ENCODE measurements at regions of chr12 and their contacts with region 1.

Region 1: GRCh38 chr12:27014085-27014858 is at the start of gene TM7SF3:
- DNase-seq: peak; percentile 96
- ATAC-seq: peak; percentile 92
- H3K4me3 Mint-ChIP-seq: peak within 1 kb of the TSS; percentile 91
- H3K27ac Mint-ChIP-seq: peak within 1 kb of the TSS; percentile 94
- H3K4me1 Mint-ChIP-seq: peaks cover 49% of the 10 kb centered on the region
- H3K27me3 Mint-ChIP-seq: no peaks in the 10 kb centered on the region
- CTCF ChIP-seq: peak; percentile 33
- total RNA-seq, gene TM7SF3: 20.7 and 30.5 TPM in 2 replicates

Region 2: GRCh38 chr12:26080911-26081310 is 933.4 kb before region 1 on chr12:
- CTCF ChIA-PET with region 1: no interaction called
- POLR2A ChIA-PET with region 1: no interaction called
- intact Hi-C with region 1: no loop called
- DNase-seq: no peak
- ATAC-seq: no peak
- H3K4me3 Mint-ChIP-seq: no peak overlapping the region
- H3K27ac Mint-ChIP-seq: no peak overlapping the region
- H3K4me1 Mint-ChIP-seq: no peaks in the 10 kb centered on the region
- H3K27me3 Mint-ChIP-seq: no peaks in the 10 kb centered on the region
- CTCF ChIP-seq: no peak

Region 3: DNA sequence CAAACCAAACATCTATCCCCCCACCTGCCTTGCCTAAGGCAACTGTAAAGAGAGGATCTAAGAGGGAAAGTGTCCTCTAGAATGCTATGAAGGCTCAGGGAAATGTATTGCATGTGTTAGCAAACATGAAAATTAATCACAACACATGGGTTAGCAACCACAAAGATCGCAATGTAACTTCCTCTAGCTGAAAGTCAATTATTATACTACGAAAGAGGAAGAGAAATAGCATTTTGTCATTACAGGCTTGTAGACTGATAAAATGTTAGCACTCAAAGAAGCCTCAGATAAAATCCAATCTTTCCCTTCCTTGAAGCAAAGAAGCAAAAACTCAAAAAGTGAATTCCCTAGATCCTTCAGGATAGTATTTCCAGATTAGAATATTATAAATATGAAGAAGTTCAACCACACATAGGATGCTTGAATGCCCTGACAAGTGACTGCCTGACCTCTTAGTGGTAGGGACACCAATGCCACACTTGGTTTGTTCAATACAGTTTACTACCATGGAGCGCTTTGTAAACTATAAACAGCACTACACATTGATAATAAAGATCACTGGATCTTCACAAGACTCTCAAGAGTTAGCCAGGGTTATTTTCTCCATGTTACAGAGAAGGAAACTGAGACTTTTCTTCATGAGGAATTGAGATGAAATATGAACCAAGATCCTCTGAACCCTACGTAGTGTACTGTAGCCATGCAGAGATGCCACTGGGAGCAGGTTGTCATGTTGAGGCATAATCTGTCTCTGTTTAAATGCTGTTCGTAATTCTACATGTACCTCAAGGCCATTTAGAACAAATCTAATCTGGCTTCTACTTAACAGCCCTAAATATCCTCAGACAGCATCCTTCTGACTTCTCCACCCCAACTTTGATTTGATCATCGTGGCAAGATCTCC is 282.0 kb before region 1 on chr12:
- CTCF ChIA-PET with region 1: no interaction called
- POLR2A ChIA-PET with region 1: interaction called, 3 read pairs
- intact Hi-C with region 1: loop called (anchors 10 kb)
- DNase-seq: no peak
- ATAC-seq: peak; percentile 74
- H3K4me3 Mint-ChIP-seq: peak overlapping the region; percentile 52
- H3K27ac Mint-ChIP-seq: peak overlapping the region; percentile 86
- H3K4me1 Mint-ChIP-seq: peaks cover 71% of the 10 kb centered on the region
- H3K27me3 Mint-ChIP-seq: no peaks in the 10 kb centered on the region
- CTCF ChIP-seq: no peak

Region 4: GRCh38 chr12:26884765-26885576 is 129.3 kb before region 1 on chr12:
- CTCF ChIA-PET with region 1: interaction called, 13 read pairs
- POLR2A ChIA-PET with region 1: no interaction called
- intact Hi-C with region 1: loop called (anchors 1 kb)
- DNase-seq: peak; percentile 45
- ATAC-seq: peak; percentile 96
- H3K4me3 Mint-ChIP-seq: peak overlapping the region; percentile 76
- H3K27ac Mint-ChIP-seq: peak overlapping the region; percentile 54
- H3K4me1 Mint-ChIP-seq: peaks cover 8% of the 10 kb centered on the region
- H3K27me3 Mint-ChIP-seq: no peaks in the 10 kb centered on the region
- CTCF ChIP-seq: peak; percentile 86

Region 5: DNA sequence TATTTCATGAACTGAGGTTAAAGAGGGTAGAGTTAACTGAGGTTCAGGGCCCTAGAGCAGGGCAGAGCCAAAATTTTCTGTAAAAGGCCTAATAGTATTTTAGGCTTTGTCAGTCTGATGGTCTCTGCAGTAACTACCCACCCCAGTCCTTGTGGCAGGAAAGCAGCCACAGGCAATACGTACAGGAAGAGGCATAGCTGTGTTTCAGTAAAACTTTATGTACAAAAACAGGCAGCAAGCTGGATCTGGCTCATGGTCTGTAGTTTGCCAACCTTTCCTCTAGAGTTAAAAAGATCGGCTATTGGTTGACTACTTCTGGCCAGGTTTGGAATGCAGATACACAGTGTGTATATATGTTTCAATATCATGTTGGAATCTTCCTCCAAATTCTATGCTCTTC is 17.3 kb before region 1 on chr12:
- CTCF ChIA-PET with region 1: interaction called, 3 read pairs
- POLR2A ChIA-PET with region 1: interaction called, 4 read pairs
- intact Hi-C with region 1: loop called (anchors 2 kb)
- DNase-seq: no peak
- ATAC-seq: no peak
- H3K4me3 Mint-ChIP-seq: no peak overlapping the region
- H3K27ac Mint-ChIP-seq: no peak overlapping the region
- H3K4me1 Mint-ChIP-seq: peaks cover 29% of the 10 kb centered on the region
- H3K27me3 Mint-ChIP-seq: no peaks in the 10 kb centered on the region
- CTCF ChIP-seq: no peak

Region 6: GRCh38 chr12:27243804-27244683 is 229.8 kb after region 1 on chr12 and contains the start of gene STK38L:
- CTCF ChIA-PET with region 1: interaction called, 5 read pairs
- POLR2A ChIA-PET with region 1: interaction called, 6 read pairs
- intact Hi-C with region 1: loop called (anchors 1 kb)
- DNase-seq: peak; percentile 97
- ATAC-seq: peak; percentile 97
- H3K4me3 Mint-ChIP-seq: peak within 1 kb of the TSS; percentile 98
- H3K27ac Mint-ChIP-seq: peak within 1 kb of the TSS; percentile 95
- H3K4me1 Mint-ChIP-seq: peaks cover 46% of the 10 kb centered on the region
- H3K27me3 Mint-ChIP-seq: no peaks in the 10 kb centered on the region
- CTCF ChIP-seq: no peak
- total RNA-seq, gene STK38L: 24.2 and 26.3 TPM in 2 replicates

Region 7: GRCh38 chr12:27710592-27711316 is 696.5 kb after region 1 on chr12 and contains the start of gene MRPS35:
- CTCF ChIA-PET with region 1: no interaction called
- POLR2A ChIA-PET with region 1: no interaction called
- intact Hi-C with region 1: loop called (anchors 5 kb)
- DNase-seq: peak; percentile 92
- ATAC-seq: peak; percentile 99
- H3K4me3 Mint-ChIP-seq: peak within 1 kb of the TSS; percentile 99
- H3K27ac Mint-ChIP-seq: peak within 1 kb of the TSS; percentile 99
- H3K4me1 Mint-ChIP-seq: peaks cover 29% of the 10 kb centered on the region
- H3K27me3 Mint-ChIP-seq: no peaks in the 10 kb centered on the region
- CTCF ChIP-seq: no peak
- total RNA-seq, gene MRPS35: 36.2 and 36.8 TPM in 2 replicates